ENCODE measurements at regions of chr3 and their contacts with region 1.

Region 1: GRCh38 chr3:149299938-149300791 is 33.3 kb downstream of the TM4SF18 start:
- DNase-seq: no peak
- ATAC-seq: no peak
- H3K4me3 ChIP-seq: no peak overlapping the region
- H3K4me3 Mint-ChIP-seq: no peak overlapping the region
- H3K27ac ChIP-seq: no peak overlapping the region
- H3K27ac Mint-ChIP-seq: no peak overlapping the region
- H3K4me1 ChIP-seq: no peaks in the 10 kb centered on the region
- H3K4me1 Mint-ChIP-seq: no peaks in the 10 kb centered on the region
- H3K27me3 ChIP-seq: peaks cover 0 to 3% (median 0%) of the 10 kb centered on the region in 4 experiments
- H3K27me3 Mint-ChIP-seq: peaks cover 25% of the 10 kb centered on the region
- CTCF ChIP-seq: no peak

Region 2: GRCh38 chr3:148991194-148992026 is 308.8 kb before region 1 on chr3 and contains the start of gene GYG1:
- CTCF ChIA-PET with region 1: no interaction called
- POLR2A ChIA-PET with region 1: interaction called, 11 read pairs
- intact Hi-C with region 1: no loop called
- DNase-seq: peak; percentile 89
- ATAC-seq: peak; percentile 89
- H3K4me3 ChIP-seq: peak within 1 kb of the TSS; percentile 60 to 93 (median 86)
- H3K4me3 Mint-ChIP-seq: peak within 1 kb of the TSS; percentile 85
- H3K27ac ChIP-seq: peak within 1 kb of the TSS; percentile 41 to 73
- H3K27ac Mint-ChIP-seq: peak within 1 kb of the TSS; percentile 82
- H3K4me1 ChIP-seq: peaks cover 14 to 19% of the 10 kb centered on the region in 2 donors
- H3K4me1 Mint-ChIP-seq: peaks cover 15% of the 10 kb centered on the region
- H3K27me3 ChIP-seq: no peaks in the 10 kb centered on the region
- H3K27me3 Mint-ChIP-seq: no peaks in the 10 kb centered on the region
- CTCF ChIP-seq: peak; percentile 18
- total RNA-seq, gene GYG1: 16.3 and 20.4 TPM in 2 replicates

Region 3: GRCh38 chr3:149366941-149367840 is 67.0 kb after region 1 on chr3:
- CTCF ChIA-PET with region 1: no interaction called
- POLR2A ChIA-PET with region 1: no interaction called
- intact Hi-C with region 1: no loop called
- DNase-seq: no peak
- ATAC-seq: no peak
- H3K4me3 ChIP-seq: no peak overlapping the region
- H3K4me3 Mint-ChIP-seq: no peak overlapping the region
- H3K27ac ChIP-seq: no peak overlapping the region
- H3K27ac Mint-ChIP-seq: no peak overlapping the region
- H3K4me1 ChIP-seq: no peaks in the 10 kb centered on the region
- H3K4me1 Mint-ChIP-seq: no peaks in the 10 kb centered on the region
- H3K27me3 ChIP-seq: peaks cover 0 to 5% (median 0%) of the 10 kb centered on the region in 4 experiments
- H3K27me3 Mint-ChIP-seq: peaks cover 26% of the 10 kb centered on the region
- CTCF ChIP-seq: no peak

Measured in B cell (primary cell).